MCF 10A (cell line): ENCODE measurements at regions of chr6 and their contacts with region 1.

Region 1: DNA sequence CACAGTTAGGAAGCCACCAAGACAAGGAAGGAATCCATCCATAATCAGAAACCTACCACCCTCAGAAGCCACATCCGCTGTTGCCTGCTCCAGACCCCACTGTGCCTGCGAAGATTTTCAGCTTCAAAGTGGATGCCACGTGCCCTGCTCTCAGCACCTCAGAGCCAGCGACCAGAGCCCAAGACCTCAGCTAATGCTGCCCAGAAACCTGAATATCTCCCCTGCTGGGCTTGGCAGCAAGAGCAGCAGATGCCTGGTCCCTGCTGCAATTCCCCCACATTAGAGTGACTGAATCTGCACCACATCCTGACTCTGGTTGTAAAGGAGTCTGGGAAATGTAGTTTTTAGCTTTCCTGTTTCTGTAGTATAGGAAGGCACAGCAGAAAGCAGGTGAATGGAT is 10.7 kb upstream of the ULBP3 start:
- DNase-seq: no peak
- H3K4me3 Mint-ChIP-seq: no peak overlapping the region
- H3K27ac Mint-ChIP-seq: no peak overlapping the region
- H3K4me1 Mint-ChIP-seq: peaks cover 6% of the 10 kb centered on the region
- H3K27me3 Mint-ChIP-seq: peaks cover 10% of the 10 kb centered on the region
- CTCF ChIP-seq: no peak

Region 2: GRCh38 chr6:150068720-150069648 is 10.6 kb before region 1 on chr6 and contains the start of gene ULBP3:
- CTCF ChIA-PET with region 1: interaction called, 13 read pairs
- POLR2A ChIA-PET with region 1: no interaction called
- intact Hi-C with region 1: no loop called
- DNase-seq: peak; percentile 98
- H3K4me3 Mint-ChIP-seq: peak within 1 kb of the TSS; percentile 77
- H3K27ac Mint-ChIP-seq: no peak within 1 kb of the TSS
- H3K4me1 Mint-ChIP-seq: peaks cover 28% of the 10 kb centered on the region
- H3K27me3 Mint-ChIP-seq: no peaks in the 10 kb centered on the region
- CTCF ChIP-seq: peak; percentile 34
- total RNA-seq, gene ULBP3: 4.9 and 6.3 TPM in 2 replicates

Region 3: DNA sequence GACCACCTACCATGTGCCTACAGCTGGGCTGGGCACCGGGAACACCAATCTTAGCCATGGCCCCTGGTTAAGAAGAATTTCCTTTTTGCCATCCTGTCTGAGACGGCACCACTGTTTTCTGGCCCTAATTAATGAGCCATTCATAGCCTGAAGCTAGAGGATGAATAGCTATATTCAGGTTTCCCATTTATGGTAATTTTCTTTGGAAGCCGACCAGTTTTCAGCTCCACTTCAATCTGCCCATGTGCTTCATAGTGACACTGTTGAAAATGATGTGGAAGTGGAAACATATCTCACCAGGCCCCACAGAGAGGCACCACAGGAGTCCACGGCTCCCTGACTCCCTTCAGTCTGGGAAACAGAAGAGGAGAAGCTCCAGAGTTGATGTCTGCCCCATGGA is 11.9 kb after region 1 on chr6:
- CTCF ChIA-PET with region 1: interaction called, 10 read pairs
- POLR2A ChIA-PET with region 1: no interaction called
- intact Hi-C with region 1: no loop called
- DNase-seq: no peak
- H3K4me3 Mint-ChIP-seq: no peak overlapping the region
- H3K27ac Mint-ChIP-seq: no peak overlapping the region
- H3K4me1 Mint-ChIP-seq: no peaks in the 10 kb centered on the region
- H3K27me3 Mint-ChIP-seq: peaks cover 15% of the 10 kb centered on the region
- CTCF ChIP-seq: no peak

Region 4: DNA sequence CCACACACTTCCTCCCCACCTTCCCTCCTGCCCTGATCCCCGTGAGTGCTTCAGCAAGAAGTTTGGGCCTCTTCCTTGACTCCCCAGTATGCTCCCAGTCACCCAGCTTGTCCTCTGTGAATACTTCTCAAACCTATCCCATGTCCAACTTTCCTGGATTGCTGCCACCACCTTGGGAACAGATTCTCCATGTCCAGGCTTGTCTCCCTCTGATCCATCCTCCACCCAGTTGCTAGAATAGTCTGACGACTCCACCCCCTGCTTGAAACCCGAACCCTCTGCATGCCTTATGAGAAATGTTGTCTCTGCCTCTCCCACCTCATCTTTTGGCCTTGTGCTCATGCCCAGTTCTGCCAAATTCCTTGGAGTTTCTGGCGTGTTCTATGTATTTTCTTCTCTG is 171.2 kb after region 1 on chr6:
- CTCF ChIA-PET with region 1: interaction called, 20 read pairs
- POLR2A ChIA-PET with region 1: interaction called, 3 read pairs
- intact Hi-C with region 1: loop called (anchors 5 kb)
- DNase-seq: peak; percentile 99
- H3K4me3 Mint-ChIP-seq: peak overlapping the region; percentile 46
- H3K27ac Mint-ChIP-seq: peak overlapping the region; percentile 95
- H3K4me1 Mint-ChIP-seq: peaks cover 42% of the 10 kb centered on the region
- H3K27me3 Mint-ChIP-seq: no peaks in the 10 kb centered on the region
- CTCF ChIP-seq: no peak

Region 5: DNA sequence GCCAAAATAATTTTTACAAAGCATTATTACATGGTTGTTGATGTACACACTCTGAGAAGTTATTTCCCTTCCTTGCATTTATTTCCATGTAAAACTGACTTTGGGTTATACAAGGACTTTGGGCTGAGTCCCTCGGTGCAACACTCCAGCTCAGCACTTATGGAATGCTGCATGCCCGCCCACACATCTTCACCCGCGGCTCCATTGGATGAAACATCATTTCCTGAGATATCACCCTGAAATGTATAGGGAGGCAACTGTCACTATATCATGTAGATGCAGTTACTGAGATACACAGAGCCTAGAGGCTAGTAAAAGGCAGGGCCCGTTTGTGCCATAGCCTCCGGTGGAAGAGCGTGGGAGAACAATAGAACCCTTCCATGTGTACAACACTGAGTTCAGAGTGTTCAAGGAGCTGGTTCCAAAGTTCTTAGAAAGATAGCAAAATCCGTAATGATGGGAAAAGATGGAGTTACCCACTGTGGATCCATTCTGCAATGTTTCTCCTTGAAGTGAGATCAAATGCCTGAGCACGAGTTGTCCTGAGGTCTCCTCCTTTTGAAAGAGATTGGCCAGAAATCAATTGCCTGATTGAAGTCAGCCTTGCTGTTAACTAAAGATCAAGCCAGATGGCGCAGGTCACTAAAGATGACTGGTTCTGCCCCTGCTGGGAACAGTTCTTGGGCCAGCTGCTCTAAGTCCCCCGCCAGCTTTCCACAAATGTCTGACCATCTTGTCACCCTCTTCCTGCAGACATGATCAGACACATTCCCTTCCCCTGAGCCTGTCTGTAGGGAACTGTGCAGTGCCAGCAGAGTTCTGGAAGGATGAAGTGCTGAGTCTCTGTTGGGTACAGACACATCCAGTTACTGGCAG is 188.3 kb after region 1 on chr6:
- CTCF ChIA-PET with region 1: interaction called, 10 read pairs
- POLR2A ChIA-PET with region 1: interaction called, 4 read pairs
- intact Hi-C with region 1: no loop called
- DNase-seq: peak; percentile 77
- H3K4me3 Mint-ChIP-seq: no peak overlapping the region
- H3K27ac Mint-ChIP-seq: peak overlapping the region; percentile 92
- H3K4me1 Mint-ChIP-seq: peaks cover 51% of the 10 kb centered on the region
- H3K27me3 Mint-ChIP-seq: no peaks in the 10 kb centered on the region
- CTCF ChIP-seq: no peak

Region 6: DNA sequence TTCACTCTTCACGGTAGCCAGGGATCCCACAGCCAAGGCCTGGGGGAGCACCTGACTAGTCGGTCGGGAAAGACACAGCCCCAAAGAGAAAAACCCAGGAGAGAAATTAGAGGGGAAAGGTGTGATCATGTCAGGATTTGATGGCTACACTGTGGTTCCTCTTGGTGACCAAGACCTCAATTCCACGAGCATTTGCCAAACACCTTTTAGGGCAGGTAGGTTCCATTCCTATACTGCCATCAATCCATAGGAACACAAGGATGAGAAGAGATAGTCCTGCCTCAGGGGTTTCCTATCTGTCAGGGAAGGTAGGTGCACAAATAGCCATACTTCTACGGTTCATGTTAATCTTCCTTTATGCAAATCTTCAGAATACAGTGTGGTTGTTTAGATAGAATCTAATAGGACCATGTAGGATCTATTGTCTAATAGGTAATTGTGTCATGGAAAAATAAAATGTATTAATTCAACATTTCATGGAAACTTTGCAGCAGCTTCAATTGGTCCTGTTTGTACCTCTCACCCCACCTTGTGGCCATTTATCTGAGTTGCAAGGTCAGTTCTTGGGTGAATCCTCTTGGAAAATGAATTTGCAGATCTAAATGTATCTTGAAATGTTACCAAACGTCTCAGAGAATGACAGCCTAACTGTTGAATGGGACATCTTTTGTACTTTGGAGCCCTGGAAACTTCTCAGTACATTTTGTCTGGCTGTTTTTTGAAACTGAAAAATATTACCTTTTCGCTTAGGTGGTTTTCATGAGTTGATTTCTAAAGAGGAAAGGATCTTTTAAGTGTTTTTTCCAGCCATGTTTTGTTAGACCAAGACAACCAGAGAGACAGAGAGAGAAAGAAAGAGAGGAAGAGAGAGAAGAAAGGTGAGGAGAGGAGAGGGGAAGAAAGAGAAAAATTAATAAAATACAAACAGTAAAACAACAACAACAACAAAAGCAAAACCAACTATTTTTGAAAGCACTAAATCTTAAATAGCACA is 255.5 kb after region 1 on chr6:
- CTCF ChIA-PET with region 1: interaction called, 23 read pairs
- POLR2A ChIA-PET with region 1: interaction called, 4 read pairs
- intact Hi-C with region 1: loop called (anchors 1 kb)
- DNase-seq: peak; percentile 76
- H3K4me3 Mint-ChIP-seq: no peak overlapping the region
- H3K27ac Mint-ChIP-seq: peak overlapping the region; percentile 4
- H3K4me1 Mint-ChIP-seq: peaks cover 18% of the 10 kb centered on the region
- H3K27me3 Mint-ChIP-seq: no peaks in the 10 kb centered on the region
- CTCF ChIP-seq: peak; percentile 82

Region 7: GRCh38 chr6:150343434-150343833 is 263.8 kb after region 1 on chr6:
- CTCF ChIA-PET with region 1: interaction called, 20 read pairs
- POLR2A ChIA-PET with region 1: no interaction called
- intact Hi-C with region 1: no loop called
- DNase-seq: no peak
- H3K4me3 Mint-ChIP-seq: no peak overlapping the region
- H3K27ac Mint-ChIP-seq: no peak overlapping the region
- H3K4me1 Mint-ChIP-seq: peaks cover 9% of the 10 kb centered on the region
- H3K27me3 Mint-ChIP-seq: no peaks in the 10 kb centered on the region
- CTCF ChIP-seq: no peak